ENCODE measurements at regions of chr6 and their contacts with region 1.

Region 1: GRCh38 chr6:30533460-30534294 is 22.6 kb downstream of the GNL1 start:
- DNase-seq: no peak
- ATAC-seq: no peak
- H3K4me3 Mint-ChIP-seq: peak overlapping the region; percentile 63
- H3K27ac Mint-ChIP-seq: peak overlapping the region; percentile 92
- H3K4me1 Mint-ChIP-seq: peaks cover 58% of the 10 kb centered on the region
- H3K27me3 Mint-ChIP-seq: no peaks in the 10 kb centered on the region

Region 2: DNA sequence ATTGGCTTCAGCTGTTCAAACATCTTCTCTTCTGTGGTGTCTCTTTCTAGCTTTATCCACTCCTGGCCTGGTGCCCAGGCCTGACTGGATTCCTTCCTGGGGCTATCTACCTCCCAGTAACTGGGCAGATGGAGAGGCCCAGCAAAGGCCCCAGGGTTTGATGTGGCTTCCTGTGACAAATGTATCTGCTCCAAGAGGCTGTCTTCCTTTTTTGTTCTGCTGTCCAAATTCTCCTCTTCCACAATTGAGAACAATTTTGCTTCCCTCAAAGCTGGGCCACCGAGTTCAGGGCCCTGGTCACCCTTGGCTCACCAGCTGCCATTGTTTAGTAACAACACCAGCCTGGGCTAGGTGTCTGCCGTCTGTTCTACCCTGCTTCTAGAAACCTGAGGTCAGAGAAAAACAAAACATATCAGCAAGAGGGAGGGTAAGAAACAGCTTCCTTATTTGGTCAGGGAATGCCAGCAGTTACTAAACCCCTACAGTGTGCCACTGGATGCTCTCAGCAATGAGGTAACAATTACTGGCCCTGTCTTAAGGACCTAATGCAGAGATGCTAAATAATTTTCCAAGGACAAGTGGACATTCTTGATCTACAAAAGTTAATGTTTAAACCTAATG is 856.6 kb before region 1 on chr6:
- CTCF ChIA-PET with region 1: no interaction called
- POLR2A ChIA-PET with region 1: no interaction called
- intact Hi-C with region 1: no loop called
- DNase-seq: peak; percentile 5
- ATAC-seq: no peak
- H3K4me3 Mint-ChIP-seq: no peak overlapping the region
- H3K27ac Mint-ChIP-seq: no peak overlapping the region
- H3K4me1 Mint-ChIP-seq: peaks cover 8% of the 10 kb centered on the region
- H3K27me3 Mint-ChIP-seq: no peaks in the 10 kb centered on the region

Region 3: DNA sequence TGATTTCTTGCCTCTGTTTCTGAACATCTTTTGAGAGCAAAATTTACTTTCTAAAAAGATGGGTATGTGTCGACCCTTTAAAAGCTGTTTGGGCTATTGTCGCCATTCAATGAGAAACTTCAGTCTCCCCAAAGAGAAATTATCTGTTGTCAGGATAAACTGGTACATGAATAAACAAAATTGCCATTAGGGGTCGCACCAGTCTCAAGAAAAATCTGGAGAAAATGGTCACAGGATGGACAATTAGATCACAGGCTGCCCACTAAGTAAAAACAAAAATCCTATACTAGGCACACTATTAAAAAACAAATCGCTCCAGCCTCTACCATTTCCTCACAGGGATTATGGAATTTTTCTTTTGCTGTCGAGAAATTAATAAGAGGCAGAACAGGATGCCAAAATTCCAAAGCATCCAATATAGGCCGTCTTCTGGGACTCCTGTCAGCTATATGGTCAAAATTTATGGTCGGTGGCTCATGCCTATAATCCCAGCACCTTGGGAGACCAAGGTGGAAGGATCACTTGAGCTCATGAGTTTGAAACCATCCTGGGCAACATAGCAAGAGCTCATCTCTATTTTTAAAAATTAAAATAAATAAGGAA is 49.9 kb before region 1 on chr6:
- CTCF ChIA-PET with region 1: interaction called, 386 read pairs
- POLR2A ChIA-PET with region 1: interaction called, 3 read pairs
- intact Hi-C with region 1: loop called (anchors 1 to 2 kb)
- DNase-seq: no peak
- ATAC-seq: no peak
- H3K4me3 Mint-ChIP-seq: no peak overlapping the region
- H3K27ac Mint-ChIP-seq: no peak overlapping the region
- H3K4me1 Mint-ChIP-seq: peaks cover 39% of the 10 kb centered on the region
- H3K27me3 Mint-ChIP-seq: peaks cover 28% of the 10 kb centered on the region

Region 4: DNA sequence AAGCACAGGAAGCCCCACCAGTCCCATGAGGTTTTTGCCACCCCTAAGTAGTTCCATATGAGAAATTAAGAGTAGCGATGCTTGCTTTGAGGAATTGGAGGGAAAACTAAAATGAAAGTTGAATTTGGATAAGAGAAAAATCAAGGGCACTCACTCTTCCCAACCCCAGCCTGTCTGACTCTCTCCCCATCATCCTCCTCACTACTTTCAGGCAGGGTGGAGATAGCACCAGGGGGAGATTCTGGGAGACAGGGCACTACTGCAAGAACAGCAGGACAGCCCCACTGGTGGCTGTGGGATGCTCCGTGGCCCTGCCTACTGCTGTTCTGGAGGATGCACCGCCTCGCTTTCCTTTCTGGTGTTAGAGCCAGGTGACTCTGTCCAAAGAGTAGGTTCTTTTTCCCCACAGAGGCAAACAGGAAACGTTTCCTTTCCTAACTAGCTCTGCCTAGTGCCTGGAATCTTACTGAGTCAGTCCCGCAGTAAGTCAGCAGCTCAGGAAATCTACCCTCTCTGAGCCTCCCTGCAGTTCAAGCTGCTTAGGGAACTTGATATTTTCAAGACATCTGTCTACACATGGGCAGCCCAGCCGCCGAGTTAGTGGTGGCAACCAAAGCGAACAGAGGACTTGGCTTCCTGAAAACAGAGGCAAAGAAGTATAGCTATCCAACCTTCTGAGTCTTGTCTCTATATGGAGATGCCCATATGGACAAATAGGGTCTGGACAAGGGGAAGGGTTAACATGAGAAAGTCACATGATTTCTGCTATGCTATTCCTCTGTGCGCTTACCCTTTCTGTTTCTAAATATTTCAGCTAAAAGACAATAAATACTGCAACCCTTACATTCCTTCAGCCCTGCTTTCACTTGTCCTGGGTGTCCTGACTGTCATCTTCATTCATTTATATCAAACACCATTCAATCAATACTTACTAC is 33.0 kb before region 1 on chr6:
- CTCF ChIA-PET with region 1: interaction called, 152 read pairs
- POLR2A ChIA-PET with region 1: interaction called, 7 read pairs
- intact Hi-C with region 1: loop called in 1 of 2 experiments (anchors 1 kb)
- DNase-seq: peak; percentile 43
- ATAC-seq: peak; percentile 37
- H3K4me3 Mint-ChIP-seq: peak overlapping the region; percentile 65
- H3K27ac Mint-ChIP-seq: peak overlapping the region; percentile 88
- H3K4me1 Mint-ChIP-seq: peaks cover 43% of the 10 kb centered on the region
- H3K27me3 Mint-ChIP-seq: no peaks in the 10 kb centered on the region

Region 5: DNA sequence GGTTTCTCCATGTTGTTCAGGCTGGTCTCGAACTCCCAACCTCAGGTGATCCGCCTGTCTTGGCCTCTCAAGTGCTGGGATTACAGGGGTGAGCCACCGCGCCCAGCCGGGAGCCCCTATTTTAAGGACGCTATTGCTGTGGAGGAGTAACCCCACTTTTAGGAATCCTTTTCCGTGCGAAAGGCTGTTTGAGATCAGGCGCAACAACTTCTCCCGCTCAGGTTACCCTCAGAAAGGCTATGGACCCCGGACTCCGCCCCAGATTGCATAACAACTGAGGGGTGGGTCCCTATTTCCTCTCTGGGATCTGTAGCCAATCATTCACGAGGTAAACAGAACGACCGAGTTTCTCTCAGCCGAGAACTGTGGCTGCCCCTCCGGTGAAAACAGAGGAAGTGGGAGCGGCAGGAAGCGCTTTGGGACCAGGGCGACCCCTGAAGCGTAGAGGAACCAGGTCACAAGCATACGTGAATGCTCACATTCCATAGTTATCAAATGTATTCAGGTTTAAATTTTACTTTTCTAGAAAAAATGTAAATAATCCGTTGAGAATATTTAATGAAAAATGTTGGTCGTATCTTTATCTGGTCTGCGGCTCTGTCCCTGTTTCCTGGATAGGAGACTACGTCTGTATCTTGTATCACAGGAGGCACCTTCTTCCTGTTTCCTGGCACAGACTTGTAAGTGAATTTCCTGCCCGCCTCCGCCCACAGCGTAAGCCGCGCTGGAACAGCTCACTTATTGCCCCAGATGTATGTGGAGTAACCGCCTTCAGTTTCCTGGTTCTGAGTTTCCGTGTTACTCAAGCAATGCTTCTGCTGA is 17.5 kb before region 1 on chr6:
- CTCF ChIA-PET with region 1: interaction called, 10 read pairs
- POLR2A ChIA-PET with region 1: interaction called, 12 read pairs
- intact Hi-C with region 1: loop called (anchors 1 kb)
- DNase-seq: peak; percentile 96
- ATAC-seq: peak; percentile 87
- H3K4me3 Mint-ChIP-seq: peak overlapping the region; percentile 74
- H3K27ac Mint-ChIP-seq: peak overlapping the region; percentile 98
- H3K4me1 Mint-ChIP-seq: peaks cover 69% of the 10 kb centered on the region
- H3K27me3 Mint-ChIP-seq: no peaks in the 10 kb centered on the region

Region 6: GRCh38 chr6:30787954-30788353 is 254.3 kb after region 1 on chr6:
- CTCF ChIA-PET with region 1: no interaction called
- POLR2A ChIA-PET with region 1: interaction called, 3 read pairs
- intact Hi-C with region 1: loop called in 1 of 2 experiments (anchors 5 kb)
- DNase-seq: peak; percentile 75
- ATAC-seq: peak; percentile 73
- H3K4me3 Mint-ChIP-seq: peak overlapping the region; percentile 59
- H3K27ac Mint-ChIP-seq: peak overlapping the region; percentile 96
- H3K4me1 Mint-ChIP-seq: peaks cover 67% of the 10 kb centered on the region
- H3K27me3 Mint-ChIP-seq: no peaks in the 10 kb centered on the region

Region 7: GRCh38 chr6:30862156-30862875 is 328.6 kb after region 1 on chr6:
- CTCF ChIA-PET with region 1: no interaction called
- POLR2A ChIA-PET with region 1: no interaction called
- intact Hi-C with region 1: no loop called
- DNase-seq: no peak
- ATAC-seq: no peak
- H3K4me3 Mint-ChIP-seq: no peak overlapping the region
- H3K27ac Mint-ChIP-seq: no peak overlapping the region
- H3K4me1 Mint-ChIP-seq: peaks cover 13% of the 10 kb centered on the region
- H3K27me3 Mint-ChIP-seq: no peaks in the 10 kb centered on the region

Region 8: GRCh38 chr6:31356946-31357466 is 823.3 kb after region 1 on chr6 and contains the start of gene HLA-B:
- CTCF ChIA-PET with region 1: no interaction called
- POLR2A ChIA-PET with region 1: no interaction called
- intact Hi-C with region 1: loop called in 1 of 2 experiments (anchors 5 kb)
- DNase-seq: peak; percentile 91
- ATAC-seq: peak; percentile 80
- H3K4me3 Mint-ChIP-seq: peak within 1 kb of the TSS; percentile 98
- H3K27ac Mint-ChIP-seq: peak within 1 kb of the TSS; percentile 99
- H3K4me1 Mint-ChIP-seq: peaks cover 56% of the 10 kb centered on the region
- H3K27me3 Mint-ChIP-seq: peaks cover 5% of the 10 kb centered on the region
- total RNA-seq, gene HLA-B: 2,101 to 2,412 TPM

Measured in activated CD4-positive, alpha-beta T cell treated with anti-CD3 and anti-CD28 coated beads for 36 hours (primary cell).